Activated CD4-positive, alpha-beta T cell treated with anti-CD3 and anti-CD28 coated beads for 36 hours (primary cell): ENCODE measurements at regions of chr16 and their contacts with region 1.

Region 1: GRCh38 chr16:21203155-21203797 is 8.1 kb downstream of the ZP2 start:
- DNase-seq: no peak
- ATAC-seq: no peak
- H3K4me3 Mint-ChIP-seq: no peak overlapping the region
- H3K27ac Mint-ChIP-seq: no peak overlapping the region
- H3K4me1 Mint-ChIP-seq: no peaks in the 10 kb centered on the region
- H3K27me3 Mint-ChIP-seq: peaks cover 10% of the 10 kb centered on the region

Region 2: GRCh38 chr16:21263640-21264570 is 60.6 kb after region 1 on chr16:
- CTCF ChIA-PET with region 1: no interaction called
- POLR2A ChIA-PET with region 1: no interaction called
- intact Hi-C with region 1: loop called in 1 of 2 experiments (anchors 10 kb)
- DNase-seq: no peak
- ATAC-seq: no peak
- H3K4me3 Mint-ChIP-seq: no peak overlapping the region
- H3K27ac Mint-ChIP-seq: no peak overlapping the region
- H3K4me1 Mint-ChIP-seq: no peaks in the 10 kb centered on the region
- H3K27me3 Mint-ChIP-seq: peaks cover 3% of the 10 kb centered on the region

Region 3: GRCh38 chr16:21321736-21322135 is 118.5 kb after region 1 on chr16:
- CTCF ChIA-PET with region 1: no interaction called
- POLR2A ChIA-PET with region 1: no interaction called
- intact Hi-C with region 1: no loop called
- DNase-seq: no peak
- ATAC-seq: no peak
- H3K4me3 Mint-ChIP-seq: no peak overlapping the region
- H3K27ac Mint-ChIP-seq: no peak overlapping the region
- H3K4me1 Mint-ChIP-seq: no peaks in the 10 kb centered on the region
- H3K27me3 Mint-ChIP-seq: peaks cover 2% of the 10 kb centered on the region